ENCODE measurements at regions of chr18 and their contacts with region 1.

Region 1: DNA sequence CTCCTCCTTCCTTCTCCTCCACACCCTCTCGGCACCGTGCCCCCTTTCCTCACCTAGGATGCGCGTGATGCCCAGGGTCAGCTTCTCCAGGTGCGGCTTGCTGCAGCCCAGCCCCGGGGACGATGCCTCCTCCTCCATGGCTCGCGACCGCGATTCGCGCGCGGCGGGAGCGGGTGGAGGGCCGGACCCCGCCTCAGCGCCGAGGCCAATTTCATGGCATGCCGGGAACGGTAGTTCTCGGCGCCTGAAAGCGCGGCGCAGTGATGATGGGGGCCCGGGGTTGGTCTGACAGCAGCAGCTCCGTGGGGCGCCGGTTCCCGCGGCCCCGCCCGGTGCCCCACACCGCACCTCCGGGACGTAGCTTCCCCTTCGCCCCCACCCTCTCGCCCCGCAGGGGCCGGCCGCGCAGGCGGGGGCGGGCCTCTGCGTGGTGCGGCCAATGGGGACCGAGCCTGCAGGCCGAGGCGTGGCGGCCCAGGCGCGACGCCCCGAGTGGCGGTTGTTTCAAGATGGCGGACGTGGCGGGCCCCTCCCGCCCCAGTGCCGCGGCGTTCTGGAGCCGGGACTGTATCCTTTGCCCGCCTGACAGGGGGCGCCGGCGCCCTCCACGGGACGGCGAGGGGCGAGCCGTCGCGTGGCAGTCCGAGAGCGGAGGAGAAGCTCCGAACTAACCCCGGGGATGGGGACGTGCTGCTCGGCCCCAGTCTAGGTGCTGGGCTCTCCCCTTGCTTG is at the starts of genes KIAA1328 and TPGS2:
- DNase-seq: peak; percentile 78
- H3K4me3 Mint-ChIP-seq: peak within 1 kb of the TSS; percentile 84
- H3K27ac Mint-ChIP-seq: peak within 1 kb of the TSS; percentile 80
- H3K4me1 Mint-ChIP-seq: peaks cover 25% of the 10 kb centered on the region
- H3K27me3 Mint-ChIP-seq: no peaks in the 10 kb centered on the region
- CTCF ChIP-seq: peak; percentile 39
- total RNA-seq, gene KIAA1328: 4.1 and 5.5 TPM in 2 replicates
- total RNA-seq, gene TPGS2: 36.5 and 40.9 TPM in 2 replicates

Region 2: GRCh38 chr18:36839835-36840234 is 11.0 kb after region 1 on chr18:
- CTCF ChIA-PET with region 1: interaction called, 3 read pairs
- POLR2A ChIA-PET with region 1: interaction called, 13 read pairs
- intact Hi-C with region 1: no loop called
- DNase-seq: no peak
- H3K4me3 Mint-ChIP-seq: no peak overlapping the region
- H3K27ac Mint-ChIP-seq: no peak overlapping the region
- H3K4me1 Mint-ChIP-seq: no peaks in the 10 kb centered on the region
- H3K27me3 Mint-ChIP-seq: no peaks in the 10 kb centered on the region
- CTCF ChIP-seq: no peak

Measured in MCF 10A (cell line).